ENCODE measurements at regions of chr1 and their contacts with region 1.

Region 1: DNA sequence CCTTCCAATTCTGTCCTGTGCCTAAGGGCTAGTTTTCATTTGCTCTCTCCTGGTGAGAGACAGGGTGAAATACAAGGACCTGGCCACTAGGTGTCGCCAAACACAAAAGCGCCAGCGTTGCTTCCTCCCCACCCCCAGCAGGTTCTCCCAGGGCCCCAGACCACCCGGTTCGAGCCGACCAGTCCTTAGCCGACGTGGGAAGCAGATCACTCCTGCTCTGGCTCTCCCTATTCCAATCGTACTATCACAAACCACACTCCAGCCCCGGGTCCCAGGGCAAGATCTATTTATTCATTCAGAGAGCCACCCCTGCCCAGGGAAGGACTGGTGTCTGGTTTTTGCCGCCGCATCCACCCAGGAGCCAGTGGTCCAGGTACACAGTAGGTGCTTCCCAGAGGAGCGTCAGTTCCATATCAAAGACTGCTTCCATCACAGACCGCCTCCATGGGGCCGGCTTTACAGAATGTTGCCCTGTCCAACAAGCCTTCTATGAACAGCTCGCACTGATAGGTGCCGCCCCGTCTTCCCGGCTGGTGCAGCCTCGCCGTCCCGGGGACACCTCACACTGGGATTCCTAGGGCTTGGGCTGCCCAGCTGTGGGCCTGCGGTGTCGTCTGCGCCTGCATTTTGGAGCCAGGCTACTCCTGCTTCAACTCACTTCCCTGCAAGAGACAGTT is 35.0 kb downstream of the CTNNBIP1 start:
- DNase-seq: peak; percentile 94
- CTCF ChIP-seq: peak; percentile 82

Region 2: GRCh38 chr1:9861360-9861759 is 13.7 kb before region 1 on chr1:
- CTCF ChIA-PET with region 1: interaction called, 57 read pairs
- POLR2A ChIA-PET with region 1: no interaction called
- DNase-seq: no peak
- CTCF ChIP-seq: no peak

Region 3: GRCh38 chr1:9886092-9886742 is 11.1 kb after region 1 on chr1:
- CTCF ChIA-PET with region 1: interaction called, 16 read pairs
- POLR2A ChIA-PET with region 1: no interaction called
- DNase-seq: no peak
- CTCF ChIP-seq: no peak

Region 4: GRCh38 chr1:9942939-9943788 is 68.1 kb after region 1 on chr1 and contains the starts of genes LZIC and NMNAT1:
- CTCF ChIA-PET with region 1: interaction called, 17 read pairs
- POLR2A ChIA-PET with region 1: no interaction called
- DNase-seq: peak; percentile 95
- CTCF ChIP-seq: no peak

Region 5: GRCh38 chr1:10065344-10065685 is 190.2 kb after region 1 on chr1:
- CTCF ChIA-PET with region 1: no interaction called
- POLR2A ChIA-PET with region 1: no interaction called
- DNase-seq: no peak
- CTCF ChIP-seq: no peak

Measured in GM10248 (cell line).